ACHN (cell line): ENCODE measurements at regions of chr7 and their contacts with region 1.

Region 1: DNA sequence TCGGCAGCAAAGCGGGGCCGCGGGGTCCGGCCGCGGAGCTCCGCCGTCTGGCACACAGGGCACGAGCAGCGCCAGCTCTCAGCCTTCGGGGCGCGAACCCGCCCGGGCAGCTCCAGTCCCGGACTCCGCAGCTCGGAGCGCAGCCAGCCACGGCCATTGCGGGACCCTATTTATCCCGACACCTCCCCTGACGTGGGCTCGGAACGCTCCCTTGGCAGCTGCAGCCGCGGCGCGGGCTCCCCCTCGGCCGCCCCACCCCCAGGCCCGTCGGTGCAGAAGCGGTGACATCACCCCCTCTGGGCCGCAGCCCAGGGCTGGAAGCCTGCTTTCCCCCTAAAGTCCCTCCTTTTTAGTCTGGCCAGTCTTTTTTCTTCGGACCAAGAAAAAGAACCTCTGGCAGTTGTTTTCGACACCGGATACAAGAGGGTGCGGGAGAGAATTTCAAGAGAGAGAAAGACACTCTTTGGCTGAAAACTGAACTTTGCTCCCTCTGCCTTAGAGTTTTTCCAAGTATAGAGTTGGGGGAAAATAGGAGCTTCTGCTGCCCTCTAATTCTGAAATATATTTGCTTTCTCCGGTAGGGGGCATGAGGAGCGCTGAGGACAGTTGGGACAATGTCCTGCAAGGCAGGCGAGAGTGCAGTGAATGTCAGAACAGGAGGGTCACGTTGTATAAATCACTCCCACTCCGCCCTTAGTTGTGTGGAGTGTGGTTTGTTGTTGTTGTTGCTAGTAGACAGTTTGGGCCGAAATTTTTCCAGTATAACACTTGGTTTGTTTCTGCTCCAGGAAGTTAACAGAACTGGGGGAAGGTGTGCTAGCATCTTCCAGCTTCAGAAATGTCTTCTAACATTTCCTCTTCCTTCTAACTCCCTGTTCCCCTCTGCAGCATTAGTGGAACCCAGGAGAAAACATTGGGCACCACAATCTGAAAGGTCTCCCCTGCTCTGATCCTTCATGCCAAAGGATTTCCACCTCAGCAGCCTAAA is at the start of gene SFRP4:
- DNase-seq: peak; percentile 92

Region 2: GRCh38 chr7:36806891-36807290 is 1110.1 kb before region 1 on chr7:
- in situ Hi-C with region 1: no loop called
- DNase-seq: no peak

Region 3: DNA sequence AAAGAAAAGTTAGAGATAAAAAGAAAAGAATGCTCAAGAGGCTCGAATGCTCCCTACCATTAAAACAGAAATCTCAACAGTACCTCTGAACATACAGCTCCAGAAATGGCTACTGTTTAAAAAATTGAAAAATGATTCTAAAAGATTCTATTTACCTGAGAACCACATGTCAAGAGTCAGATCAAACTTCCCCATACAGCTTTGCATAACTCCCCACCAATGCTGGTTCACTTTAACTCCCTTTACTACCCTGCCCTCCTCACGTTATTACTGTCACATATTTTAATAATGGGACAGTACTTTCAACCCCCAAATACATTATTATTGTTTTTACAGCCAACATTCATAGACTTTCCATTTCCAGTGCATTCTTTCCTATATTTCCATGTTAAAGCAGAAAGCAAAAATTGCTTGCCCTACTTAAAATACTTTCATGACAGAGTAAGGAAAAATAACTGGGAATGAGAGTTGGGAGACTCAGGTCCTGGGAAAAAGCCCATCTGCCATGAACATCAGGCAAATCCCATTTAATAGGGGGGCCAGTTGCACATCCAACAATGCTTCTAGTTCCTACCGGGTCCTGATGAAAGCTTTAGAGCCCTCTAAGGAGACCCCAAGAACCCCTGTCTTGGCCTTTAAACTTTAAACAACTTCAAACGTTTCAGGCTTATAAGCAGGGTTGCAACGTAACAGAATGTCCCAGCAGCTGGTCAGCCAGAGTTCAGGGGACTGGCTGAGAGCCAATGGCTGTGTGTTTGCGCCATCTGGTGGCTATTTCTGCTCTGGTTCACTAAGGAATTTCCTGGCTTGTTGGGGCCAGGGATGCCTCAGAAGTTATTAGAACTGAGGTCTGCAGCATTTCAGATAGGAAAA is 715.7 kb before region 1 on chr7:
- in situ Hi-C with region 1: no loop called
- DNase-seq: peak; percentile 79

Region 4: DNA sequence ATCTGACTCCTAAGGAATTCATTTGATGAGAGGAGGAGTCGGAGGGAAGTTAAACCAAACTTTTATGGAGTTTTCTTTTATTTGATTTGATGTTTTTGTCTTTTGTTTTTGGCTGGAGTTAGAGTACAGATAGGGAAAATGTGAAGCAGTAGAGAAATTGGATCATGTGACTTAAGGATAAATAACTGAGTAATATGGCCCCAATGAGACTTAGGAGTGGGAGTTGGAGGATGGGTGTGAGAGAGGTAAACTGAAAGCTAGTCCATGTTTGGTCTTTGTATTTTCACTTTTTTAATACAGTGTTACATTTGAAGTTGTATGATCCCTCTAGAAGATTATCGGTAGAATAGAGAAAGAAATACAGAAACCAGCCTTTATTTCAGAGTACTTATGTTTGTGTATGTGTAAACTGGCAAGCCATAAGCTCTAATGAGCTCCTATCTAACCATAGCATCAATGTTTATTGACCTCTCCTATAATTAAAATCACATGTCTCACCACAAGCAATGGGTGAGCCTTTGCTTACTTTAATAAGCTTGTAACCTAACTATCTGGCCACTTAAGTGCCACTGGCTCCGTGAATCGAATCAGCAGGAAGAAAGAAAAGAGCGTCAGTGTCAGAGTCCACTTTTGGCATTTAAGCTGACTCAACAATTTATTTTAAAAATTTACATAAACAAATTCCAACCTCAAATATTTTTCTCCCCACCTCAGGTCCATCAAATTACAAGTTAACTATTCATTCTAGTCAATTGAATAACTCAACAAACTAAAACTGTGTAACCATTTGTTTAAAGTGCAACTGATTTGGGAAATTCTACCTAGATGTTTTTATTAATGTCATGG is 117.3 kb after region 1 on chr7:
- in situ Hi-C with region 1: no loop called
- DNase-seq: no peak

Region 5: GRCh38 chr7:38178004-38178694 is 261.2 kb after region 1 on chr7 and contains the start of gene STARD3NL:
- in situ Hi-C with region 1: loop called (anchors 25 kb)
- DNase-seq: peak; percentile 100

Region 6: DNA sequence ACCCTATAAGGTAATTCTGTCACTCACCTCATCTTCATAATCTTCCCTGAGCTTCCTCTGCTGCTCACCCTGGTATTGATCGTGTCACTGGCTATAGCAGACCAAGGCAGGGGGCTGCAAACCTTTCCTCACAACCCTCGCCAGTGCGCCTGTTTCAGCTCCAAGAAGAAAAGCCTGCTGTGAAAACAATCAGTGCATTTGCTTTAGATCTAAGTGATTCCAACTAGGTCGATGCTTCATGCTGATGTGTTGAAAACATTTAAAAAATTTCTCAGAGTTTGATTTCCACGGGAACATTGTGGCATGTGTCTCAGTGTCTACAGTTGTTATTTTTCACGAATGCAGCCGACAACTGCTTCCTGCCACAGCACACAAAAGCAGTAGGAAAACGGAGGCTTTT is 1088.1 kb after region 1 on chr7:
- in situ Hi-C with region 1: no loop called
- DNase-seq: no peak